CD4-positive, alpha-beta T cell (primary cell): ENCODE measurements at regions of chr15 and their contacts with region 1.

Region 1: DNA sequence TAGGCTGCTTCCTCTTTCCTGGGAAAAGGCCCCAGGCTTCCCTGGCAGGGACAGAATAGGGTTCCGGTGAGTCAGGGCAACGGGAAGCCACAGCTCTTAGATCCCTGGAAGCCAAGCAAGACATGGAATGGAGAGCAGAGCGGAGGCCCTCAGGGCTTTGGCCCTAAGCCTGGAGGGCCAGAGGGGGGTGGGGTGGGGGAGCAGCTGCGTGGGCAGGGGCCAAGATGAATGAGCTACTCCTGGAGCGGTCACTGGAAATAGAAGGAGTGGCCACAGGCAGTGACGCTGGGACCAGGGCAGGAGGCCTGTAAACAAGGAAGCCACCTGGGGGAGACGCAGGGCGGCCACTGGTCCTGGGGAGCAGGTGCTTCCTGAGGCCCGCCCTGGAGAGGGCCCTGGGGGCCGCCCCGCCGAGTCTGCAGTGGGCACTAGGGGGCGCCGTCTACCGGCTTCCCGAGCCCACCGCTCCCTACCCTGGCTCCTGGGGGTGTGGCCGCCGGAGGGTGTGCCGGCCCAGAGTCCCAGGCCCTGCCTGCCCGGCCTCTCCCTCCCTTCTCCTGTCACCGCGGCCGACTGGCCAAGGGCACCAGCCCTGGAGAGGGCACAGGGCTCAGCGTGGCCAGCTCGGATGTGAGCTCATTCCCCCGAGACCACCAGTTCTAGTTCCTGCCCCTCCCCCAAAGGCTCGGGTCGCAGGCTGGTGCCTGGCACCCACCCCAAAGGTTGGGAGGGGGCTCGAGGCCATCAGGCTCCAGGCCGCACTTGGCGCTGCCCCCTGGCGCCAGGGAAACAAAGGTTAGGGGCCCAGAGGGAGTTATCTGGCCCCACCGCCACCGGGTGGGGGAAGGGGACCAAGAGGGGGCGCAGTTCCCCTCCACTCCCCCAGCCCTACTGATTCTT is 12.1 kb downstream of the VPS18 start:
- DNase-seq: peak; percentile 54 to 84 (median 66)
- ATAC-seq: peak; percentile 58
- H3K4me3 ChIP-seq: peak overlapping the region; percentile 70
- H3K4me3 Mint-ChIP-seq: peak overlapping the region; percentile 89
- H3K27ac ChIP-seq: peak overlapping the region; percentile 67 to 78
- H3K27ac Mint-ChIP-seq: peak overlapping the region; percentile 71
- H3K4me1 ChIP-seq: peaks cover 51% of the 10 kb centered on the region
- H3K4me1 Mint-ChIP-seq: peaks cover 37% of the 10 kb centered on the region
- H3K27me3 ChIP-seq: no peaks in the 10 kb centered on the region
- H3K27me3 Mint-ChIP-seq: no peaks in the 10 kb centered on the region
- CTCF ChIP-seq: peak; percentile 89

Region 2: DNA sequence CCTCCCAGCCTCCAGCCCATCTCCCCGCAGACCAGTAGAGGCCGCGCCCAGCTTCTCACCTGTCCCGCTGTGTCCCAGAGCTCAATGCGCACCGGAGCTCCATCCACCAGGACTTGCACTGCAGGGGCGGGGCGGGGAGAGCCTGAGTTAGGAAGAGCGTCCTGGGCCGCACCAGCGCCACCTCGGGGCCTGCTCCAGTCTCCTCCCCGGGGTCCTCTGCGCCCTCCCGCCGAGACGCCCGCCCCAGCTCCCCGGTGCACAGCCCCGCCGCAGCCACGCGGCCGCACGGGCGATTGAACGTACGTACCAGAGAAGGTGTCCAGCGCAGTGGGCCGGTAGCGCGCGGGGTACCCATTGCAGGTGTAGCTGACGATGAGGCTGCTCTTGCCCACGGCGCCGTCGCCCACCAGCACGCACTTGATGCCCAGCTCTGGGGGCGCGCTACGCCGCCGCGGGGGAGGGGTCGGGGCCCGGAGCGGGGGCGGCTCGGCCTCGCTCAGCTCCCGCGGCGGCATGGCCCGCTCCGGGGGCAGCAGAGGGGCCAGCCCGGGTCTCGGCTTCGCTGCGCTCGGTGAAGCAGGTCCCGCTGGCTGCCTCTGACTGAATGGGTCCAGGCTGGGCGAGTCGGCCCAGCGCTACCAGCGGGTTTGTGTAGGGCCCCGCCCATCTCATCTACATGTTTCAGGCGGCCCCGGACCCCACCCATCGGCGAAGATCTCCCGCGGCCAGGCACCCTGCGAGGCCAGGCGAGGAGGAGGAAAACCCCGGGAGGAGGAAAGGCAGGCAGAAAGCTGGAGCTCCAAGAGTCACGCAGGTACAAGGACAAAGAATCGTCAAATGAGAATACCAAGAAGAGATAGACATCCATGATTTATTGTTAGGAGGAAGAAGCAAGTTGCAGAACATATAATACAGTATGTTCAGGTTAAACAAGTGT is 32.4 kb before region 1 on chr15 and contains the start of gene RHOV:
- CTCF ChIA-PET with region 1: interaction called, 10 read pairs
- POLR2A ChIA-PET with region 1: interaction called, 3 read pairs
- intact Hi-C with region 1: no loop called
- DNase-seq: peak in 13 of 14 experiments; percentile 19 to 73 (median 44)
- ATAC-seq: peak; percentile 87
- H3K4me3 ChIP-seq: peak within 1 kb of the TSS; percentile 53
- H3K4me3 Mint-ChIP-seq: peak within 1 kb of the TSS; percentile 81
- H3K27ac ChIP-seq: no peak within 1 kb of the TSS
- H3K27ac Mint-ChIP-seq: no peak within 1 kb of the TSS
- H3K4me1 ChIP-seq: peaks cover 14% of the 10 kb centered on the region
- H3K4me1 Mint-ChIP-seq: peaks cover 5% of the 10 kb centered on the region
- H3K27me3 ChIP-seq: no peaks in the 10 kb centered on the region
- H3K27me3 Mint-ChIP-seq: no peaks in the 10 kb centered on the region
- CTCF ChIP-seq: no peak
- total RNA-seq, gene RHOV: 0.36 TPM

Region 3: DNA sequence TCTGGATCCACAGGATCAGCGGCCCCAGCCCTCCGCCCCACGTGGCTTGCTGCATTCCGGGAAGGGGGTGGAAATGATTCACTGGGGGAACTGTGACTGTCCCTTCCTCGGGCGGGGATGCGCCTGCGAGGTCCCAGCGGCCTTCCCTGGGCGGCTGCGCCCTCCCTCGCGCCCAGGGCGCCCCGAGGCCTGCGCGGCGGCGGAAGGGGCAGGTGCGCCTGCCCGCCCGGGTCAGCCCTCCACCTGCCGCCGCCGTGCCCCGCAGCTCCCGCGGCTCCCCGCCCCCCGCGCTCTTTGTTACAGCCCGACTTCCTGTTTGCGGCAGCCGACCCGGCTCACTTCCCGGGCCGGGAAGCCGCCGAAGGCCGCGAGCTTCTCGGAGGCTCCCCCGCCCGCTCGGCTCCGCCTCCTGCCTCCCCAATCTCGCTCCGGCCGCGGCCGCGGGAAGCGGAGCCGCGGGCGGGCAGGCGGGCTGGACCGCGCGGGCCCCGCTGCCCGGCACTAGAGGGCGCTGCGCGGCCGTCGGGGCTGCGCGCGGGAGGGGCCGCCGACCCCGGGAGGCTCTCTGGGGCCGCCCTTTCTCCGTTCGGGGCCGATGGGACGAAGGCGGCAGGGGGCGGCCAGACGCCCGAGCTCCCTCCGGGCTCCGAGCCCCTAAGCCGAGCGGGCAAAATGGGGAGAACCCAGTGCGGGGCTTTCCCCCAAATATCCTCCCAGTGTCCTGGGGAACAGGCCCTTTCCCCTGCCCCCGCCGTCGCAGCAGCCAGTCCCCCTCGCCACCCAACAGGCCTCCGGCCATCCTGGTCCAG is 35.4 kb after region 1 on chr15:
- CTCF ChIA-PET with region 1: interaction called, 19 read pairs
- POLR2A ChIA-PET with region 1: interaction called, 24 read pairs
- intact Hi-C with region 1: loop called in 1 of 2 experiments (anchors 2 kb)
- DNase-seq: peak; percentile 24 to 85 (median 62)
- ATAC-seq: peak; percentile 62
- H3K4me3 ChIP-seq: peak overlapping the region; percentile 80
- H3K4me3 Mint-ChIP-seq: peak overlapping the region; percentile 79
- H3K27ac ChIP-seq: peak overlapping the region; percentile 51 to 58
- H3K27ac Mint-ChIP-seq: peak overlapping the region; percentile 69
- H3K4me1 ChIP-seq: peaks cover 38% of the 10 kb centered on the region
- H3K4me1 Mint-ChIP-seq: peaks cover 31% of the 10 kb centered on the region
- H3K27me3 ChIP-seq: no peaks in the 10 kb centered on the region
- H3K27me3 Mint-ChIP-seq: no peaks in the 10 kb centered on the region
- CTCF ChIP-seq: no peak

Region 4: GRCh38 chr15:41022487-41023090 is 116.2 kb after region 1 on chr15:
- CTCF ChIA-PET with region 1: interaction called, 29 read pairs
- POLR2A ChIA-PET with region 1: no interaction called
- intact Hi-C with region 1: loop called (anchors 1 kb)
- DNase-seq: peak in 12 of 14 experiments; percentile 2 to 69 (median 27)
- ATAC-seq: peak; percentile 66
- H3K4me3 ChIP-seq: no peak overlapping the region
- H3K4me3 Mint-ChIP-seq: no peak overlapping the region
- H3K27ac ChIP-seq: no peak overlapping the region
- H3K27ac Mint-ChIP-seq: no peak overlapping the region
- H3K4me1 ChIP-seq: no peaks in the 10 kb centered on the region
- H3K4me1 Mint-ChIP-seq: no peaks in the 10 kb centered on the region
- H3K27me3 ChIP-seq: no peaks in the 10 kb centered on the region
- H3K27me3 Mint-ChIP-seq: no peaks in the 10 kb centered on the region
- CTCF ChIP-seq: peak; percentile 59

Region 5: GRCh38 chr15:41331833-41332787 is 425.8 kb after region 1 on chr15 and contains the start of gene OIP5:
- CTCF ChIA-PET with region 1: no interaction called
- POLR2A ChIA-PET with region 1: interaction called, 4 read pairs
- intact Hi-C with region 1: loop called in 1 of 2 experiments (anchors 5 kb)
- DNase-seq: peak; percentile 94 to 99 (median 97)
- ATAC-seq: peak; percentile 96
- H3K4me3 ChIP-seq: peak within 1 kb of the TSS; percentile 77
- H3K4me3 Mint-ChIP-seq: peak within 1 kb of the TSS; percentile 95
- H3K27ac ChIP-seq: peak within 1 kb of the TSS in 1 of 2 donors; percentile 38
- H3K27ac Mint-ChIP-seq: peak within 1 kb of the TSS; percentile 78
- H3K4me1 ChIP-seq: peaks cover 21% of the 10 kb centered on the region
- H3K4me1 Mint-ChIP-seq: peaks cover 19% of the 10 kb centered on the region
- H3K27me3 ChIP-seq: no peaks in the 10 kb centered on the region
- H3K27me3 Mint-ChIP-seq: no peaks in the 10 kb centered on the region
- CTCF ChIP-seq: peak; percentile 58
- total RNA-seq, gene OIP5: 0.20 to 0.36 TPM